Sigmoid colon (tissue), 7 donors: ENCODE measurements at regions of chr12 and their contacts with region 1.

Region 1: DNA sequence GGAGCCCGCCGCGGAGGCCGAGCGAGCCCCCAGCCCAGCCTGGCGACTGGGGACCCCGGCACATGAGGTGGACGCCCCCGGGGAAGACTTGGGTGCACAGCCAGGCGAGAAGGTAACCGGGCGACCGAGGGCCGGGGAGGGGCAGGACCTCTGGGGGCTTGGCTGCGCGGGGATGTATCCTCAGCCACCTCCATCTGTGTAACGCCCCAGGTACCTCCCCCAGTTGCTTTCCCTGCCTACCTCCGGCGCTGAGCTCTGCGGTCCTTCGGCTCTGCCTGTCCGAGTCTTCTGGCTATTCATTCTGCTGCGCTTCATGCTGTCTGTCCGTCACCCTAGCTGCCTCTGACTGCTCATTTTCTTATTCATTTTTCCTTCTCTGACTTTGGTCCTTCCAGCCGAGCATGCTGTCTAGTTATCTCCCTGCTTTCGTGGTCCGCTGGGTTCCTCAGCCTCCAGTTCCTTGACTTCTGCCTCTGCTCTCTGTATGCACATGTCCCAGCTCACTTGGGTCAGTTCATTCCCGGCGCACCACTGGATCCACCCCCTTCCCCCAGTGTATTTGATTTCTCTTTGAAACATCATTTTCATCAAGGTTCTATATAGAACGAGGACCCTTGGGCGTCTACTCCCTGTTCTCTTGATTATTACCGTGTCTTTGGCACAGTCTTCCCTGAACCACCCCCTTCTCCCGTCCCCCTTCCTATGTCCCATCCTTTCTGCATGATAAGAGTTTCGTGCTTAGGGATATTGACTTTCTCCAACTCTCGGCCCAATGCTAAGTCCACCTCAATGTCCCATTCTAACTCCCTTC is 612 bp downstream of the PHC1 start:
- DNase-seq: peak; percentile 77
- H3K4me3 ChIP-seq: peak overlapping the region; percentile 52 to 72 (median 64)
- H3K27ac ChIP-seq: peak overlapping the region; percentile 83 to 95 (median 92)
- H3K4me1 ChIP-seq: peaks cover 0 to 29% (median 23%) of the 10 kb centered on the region in 4 donors
- H3K27me3 ChIP-seq: no peaks in the 10 kb centered on the region
- CTCF ChIP-seq: no peak
- EP300 ChIP-seq: no peak
- POLR2A ChIP-seq: no peak

Region 2: GRCh38 chr12:8637666-8638065 is 277.3 kb before region 1 on chr12:
- intact Hi-C with region 1: no loop called
- DNase-seq: no peak
- H3K4me3 ChIP-seq: no peak overlapping the region
- H3K27ac ChIP-seq: no peak overlapping the region
- H3K4me1 ChIP-seq: no peaks in the 10 kb centered on the region
- H3K27me3 ChIP-seq: no peaks in the 10 kb centered on the region
- CTCF ChIP-seq: no peak
- EP300 ChIP-seq: no peak
- POLR2A ChIP-seq: no peak

Region 3: GRCh38 chr12:8681041-8681902 is 233.6 kb before region 1 on chr12:
- intact Hi-C with region 1: loop called (anchors 5 kb)
- DNase-seq: no peak
- H3K4me3 ChIP-seq: no peak overlapping the region
- H3K27ac ChIP-seq: peak overlapping the region in 3 of 4 donors; percentile 41 to 49 (median 44)
- H3K4me1 ChIP-seq: peaks cover 0 to 10% (median 0%) of the 10 kb centered on the region in 4 donors
- H3K27me3 ChIP-seq: no peaks in the 10 kb centered on the region
- CTCF ChIP-seq: no peak
- EP300 ChIP-seq: no peak
- POLR2A ChIP-seq: no peak

Region 4: GRCh38 chr12:8890313-8891085 is 24.4 kb before region 1 on chr12:
- intact Hi-C with region 1: no loop called
- DNase-seq: no peak
- H3K4me3 ChIP-seq: peak overlapping the region; percentile 19 to 51 (median 44)
- H3K27ac ChIP-seq: peak overlapping the region in 3 of 4 donors; percentile 40 to 59 (median 53)
- H3K4me1 ChIP-seq: no peaks in the 10 kb centered on the region
- H3K27me3 ChIP-seq: no peaks in the 10 kb centered on the region
- CTCF ChIP-seq: peak; percentile 63 to 86 (median 76)
- EP300 ChIP-seq: no peak
- POLR2A ChIP-seq: no peak

Region 5: DNA sequence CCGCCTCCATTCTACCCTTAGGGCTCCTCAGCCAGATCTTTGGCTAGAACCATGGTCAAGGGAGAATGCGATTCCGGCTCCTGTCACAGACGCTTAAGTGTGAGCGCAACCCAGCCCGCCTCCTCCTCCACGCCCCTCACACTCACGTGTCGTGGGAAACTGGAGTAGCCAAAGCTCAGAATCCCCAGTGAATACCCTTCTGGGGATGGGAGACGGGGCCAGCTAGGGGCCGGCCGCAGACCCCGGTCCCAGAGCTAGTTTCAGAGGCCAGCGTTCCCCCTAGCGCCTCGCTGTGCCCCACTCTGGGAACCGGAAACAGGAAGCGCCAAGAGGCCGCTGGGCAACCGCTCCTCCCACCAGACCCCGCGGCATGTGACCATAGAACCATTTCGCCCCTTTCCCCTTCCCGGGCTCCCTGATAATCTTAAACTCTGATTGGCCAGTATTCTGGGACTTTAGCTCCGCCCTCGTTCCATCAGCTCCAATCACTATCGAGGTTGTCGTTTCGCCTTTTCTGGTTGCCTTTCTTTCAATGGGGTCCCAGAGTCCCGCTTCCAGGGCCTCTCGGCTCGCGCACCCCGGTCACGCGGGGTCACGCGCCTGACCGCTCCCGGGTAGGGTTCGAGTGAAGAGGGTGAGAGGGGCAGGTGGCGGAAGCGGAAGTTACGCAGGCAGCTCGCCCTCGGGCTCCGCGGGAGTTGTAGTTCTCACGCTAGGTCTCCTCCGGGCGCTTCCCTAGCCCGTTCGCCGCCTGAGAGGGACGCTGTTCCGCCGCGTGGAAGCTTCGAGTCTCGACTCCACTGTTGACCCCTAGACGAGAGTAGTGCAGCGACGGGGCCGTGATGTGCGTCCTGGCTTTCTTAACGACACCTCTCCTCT is 34.7 kb after region 1 on chr12 and contains the start of gene M6PR:
- intact Hi-C with region 1: loop called (anchors 2 kb)
- DNase-seq: peak; percentile 97
- H3K4me3 ChIP-seq: peak within 1 kb of the TSS; percentile 67 to 90 (median 82)
- H3K27ac ChIP-seq: peak within 1 kb of the TSS; percentile 94 to 99 (median 96)
- H3K4me1 ChIP-seq: peaks cover 0 to 31% (median 21%) of the 10 kb centered on the region in 4 donors
- H3K27me3 ChIP-seq: no peaks in the 10 kb centered on the region
- CTCF ChIP-seq: peak; percentile 7 to 43 (median 27)
- EP300 ChIP-seq: no peak
- POLR2A ChIP-seq: peak; percentile 66 to 78
- total RNA-seq, gene M6PR: 63.1 to 97.0 (median 64.9) TPM

Region 6: DNA sequence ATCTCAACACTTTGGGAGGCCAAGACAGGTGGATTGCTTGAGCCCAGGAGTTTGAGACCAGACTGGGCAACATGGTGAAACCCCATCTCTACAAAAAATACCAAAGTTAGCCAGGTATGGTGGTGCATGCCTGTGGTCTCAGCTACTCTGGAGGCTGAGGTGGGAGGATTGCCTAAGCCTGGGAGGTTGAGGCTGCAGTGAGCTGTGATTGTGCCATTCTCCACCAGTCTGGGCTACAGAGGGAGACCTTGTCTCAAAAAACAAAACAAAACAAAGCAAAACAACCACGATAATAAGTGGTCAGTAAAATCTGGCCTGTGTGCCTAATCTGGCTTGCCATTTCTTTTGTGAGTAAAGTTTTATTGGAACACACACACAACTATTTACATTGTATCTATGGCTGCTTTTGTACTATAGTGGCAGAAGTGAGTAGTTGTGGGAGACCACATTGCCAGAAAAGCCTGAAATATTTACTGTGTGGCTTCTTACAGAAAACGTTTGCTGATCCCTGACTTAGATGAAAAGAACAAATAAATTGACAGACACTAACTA is 55.0 kb after region 1 on chr12:
- intact Hi-C with region 1: no loop called
- DNase-seq: no peak
- H3K4me3 ChIP-seq: no peak overlapping the region
- H3K27ac ChIP-seq: no peak overlapping the region
- H3K4me1 ChIP-seq: no peaks in the 10 kb centered on the region
- H3K27me3 ChIP-seq: no peaks in the 10 kb centered on the region
- CTCF ChIP-seq: no peak
- EP300 ChIP-seq: no peak
- POLR2A ChIP-seq: no peak

Region 7: GRCh38 chr12:9064201-9064814 is 149.4 kb after region 1 on chr12:
- intact Hi-C with region 1: loop called (anchors 10 kb)
- DNase-seq: peak; percentile 79
- H3K4me3 ChIP-seq: peak overlapping the region; percentile 73 to 95 (median 88)
- H3K27ac ChIP-seq: peak overlapping the region; percentile 96 to 100 (median 99)
- H3K4me1 ChIP-seq: peaks cover 0 to 16% (median 13%) of the 10 kb centered on the region in 4 donors
- H3K27me3 ChIP-seq: no peaks in the 10 kb centered on the region
- CTCF ChIP-seq: peak in 2 of 4 experiments; percentile 21 to 37
- EP300 ChIP-seq: no peak
- POLR2A ChIP-seq: peak; percentile 15 to 16

Region 8: DNA sequence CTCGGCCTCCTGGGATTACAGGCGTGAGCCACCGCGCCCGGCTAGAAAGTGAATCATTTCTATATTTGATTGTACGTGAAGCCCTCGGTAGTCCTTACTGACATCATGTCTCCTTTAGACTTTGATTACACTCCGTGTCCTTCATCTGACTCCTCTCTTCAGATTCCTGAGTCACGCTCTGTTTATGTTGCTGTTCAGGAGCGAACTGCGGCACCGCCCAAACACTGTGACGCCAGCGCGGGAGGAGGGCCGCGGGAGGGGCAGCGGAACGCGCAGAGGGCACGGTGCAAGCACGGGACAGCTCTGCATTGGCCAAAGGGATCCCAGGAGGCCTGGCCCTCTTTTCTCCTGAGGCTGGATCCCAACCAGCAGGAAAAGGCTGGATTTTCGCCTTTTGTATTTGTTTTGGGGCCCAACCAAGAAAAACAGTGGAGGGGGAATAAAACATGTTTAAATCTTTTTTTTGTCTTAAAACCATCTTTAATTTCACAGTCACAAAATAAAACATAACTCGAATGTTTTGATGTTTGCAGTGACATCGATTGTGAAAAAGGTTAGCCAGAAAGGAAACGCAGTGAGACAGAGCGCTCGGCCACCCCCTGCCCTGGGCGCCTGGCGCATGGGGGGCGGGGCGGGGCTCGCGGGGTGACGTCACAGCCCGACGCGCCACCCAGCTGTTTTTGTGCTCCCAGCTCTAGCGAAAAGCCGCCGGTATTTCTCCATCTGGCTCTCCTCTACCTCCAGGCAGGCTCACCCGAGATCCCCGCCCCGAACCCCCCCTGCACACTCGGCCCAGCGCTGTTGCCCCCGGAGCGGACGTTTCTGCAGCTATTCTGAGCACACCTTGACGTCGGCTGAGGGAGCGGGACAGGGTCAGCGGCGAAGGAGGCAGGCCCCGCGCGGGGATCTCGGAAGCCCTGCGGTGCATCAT is 1297.5 kb after region 1 on chr12 and contains the start of gene GABARAPL1:
- intact Hi-C with region 1: loop called (anchors 10 kb)
- DNase-seq: peak; percentile 99
- H3K4me3 ChIP-seq: peak within 1 kb of the TSS; percentile 68 to 93 (median 88)
- H3K27ac ChIP-seq: peak within 1 kb of the TSS; percentile 95 to 100 (median 100)
- H3K4me1 ChIP-seq: peaks cover 0 to 25% (median 21%) of the 10 kb centered on the region in 4 donors
- H3K27me3 ChIP-seq: no peaks in the 10 kb centered on the region
- CTCF ChIP-seq: no peak
- EP300 ChIP-seq: peak; percentile 79 to 99 (median 91)
- POLR2A ChIP-seq: peak in 1 of 2 donors; percentile 56
- total RNA-seq, gene GABARAPL1: 78.5 to 122 (median 102) TPM